ENCODE measurements at regions of chr10 and their contacts with region 1.

Region 1: GRCh38 chr10:92290837-92291615 is at the starts of genes CPEB3 and MARCHF5:
- DNase-seq: peak; percentile 98
- H3K4me3 ChIP-seq: peak within 1 kb of the TSS; percentile 66 to 99 (median 79)
- H3K27ac ChIP-seq: peak within 1 kb of the TSS; percentile 87
- H3K4me1 ChIP-seq: peaks cover 15% of the 10 kb centered on the region
- H3K27me3 ChIP-seq: no peaks in the 10 kb centered on the region
- CTCF ChIP-seq: peak; percentile 45 to 65
- POLR2A ChIP-seq: peak; percentile 52
- total RNA-seq, gene CPEB3: 2.2 and 2.3 TPM in 2 replicates
- total RNA-seq, gene MARCHF5: 48.0 and 55.7 TPM in 2 replicates

Region 2: DNA sequence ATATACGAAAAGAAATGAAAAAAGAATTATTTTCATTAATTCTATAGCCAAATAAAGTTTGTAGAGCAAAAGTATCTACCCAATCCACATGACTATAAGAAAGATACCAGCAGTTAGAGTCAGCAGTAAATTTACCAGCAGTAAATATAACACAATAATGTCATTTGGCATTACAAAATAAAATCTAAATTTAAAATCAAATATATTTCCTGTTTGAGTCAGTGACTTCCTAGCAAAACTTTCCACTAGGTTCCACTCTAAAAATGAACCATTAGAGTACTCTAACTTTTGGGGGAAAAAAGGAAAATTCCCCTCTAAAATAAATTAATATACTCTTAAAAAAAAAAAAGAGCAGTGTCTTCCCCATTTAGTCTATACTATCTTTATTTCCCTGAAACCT is 144.9 kb before region 1 on chr10:
- CTCF ChIA-PET with region 1: interaction called, 8 read pairs
- POLR2A ChIA-PET with region 1: interaction called, 5 read pairs
- dilution Hi-C with region 1: no loop called
- intact Hi-C with region 1: loop called (anchors 5 kb)
- DNase-seq: peak; percentile 26
- H3K4me3 ChIP-seq: peak overlapping the region in 1 of 3 experiments; percentile 38
- H3K27ac ChIP-seq: peak overlapping the region; percentile 26
- H3K4me1 ChIP-seq: peaks cover 33% of the 10 kb centered on the region
- H3K27me3 ChIP-seq: no peaks in the 10 kb centered on the region
- CTCF ChIP-seq: no peak
- POLR2A ChIP-seq: no peak

Region 3: GRCh38 chr10:92156874-92157773 is 133.9 kb before region 1 on chr10:
- CTCF ChIA-PET with region 1: no interaction called
- POLR2A ChIA-PET with region 1: no interaction called
- dilution Hi-C with region 1: no loop called
- intact Hi-C with region 1: no loop called
- DNase-seq: no peak
- H3K4me3 ChIP-seq: no peak overlapping the region
- H3K27ac ChIP-seq: no peak overlapping the region
- H3K4me1 ChIP-seq: no peaks in the 10 kb centered on the region
- H3K27me3 ChIP-seq: no peaks in the 10 kb centered on the region
- CTCF ChIP-seq: no peak
- POLR2A ChIP-seq: no peak

Region 4: GRCh38 chr10:92208736-92209327 is 82.2 kb before region 1 on chr10:
- CTCF ChIA-PET with region 1: interaction called, 9 read pairs
- POLR2A ChIA-PET with region 1: interaction called, 5 read pairs
- dilution Hi-C with region 1: no loop called
- intact Hi-C with region 1: loop called (anchors 1 kb)
- DNase-seq: peak; percentile 15
- H3K4me3 ChIP-seq: no peak overlapping the region
- H3K27ac ChIP-seq: no peak overlapping the region
- H3K4me1 ChIP-seq: peaks cover 10% of the 10 kb centered on the region
- H3K27me3 ChIP-seq: no peaks in the 10 kb centered on the region
- CTCF ChIP-seq: no peak
- POLR2A ChIP-seq: no peak

Region 5: DNA sequence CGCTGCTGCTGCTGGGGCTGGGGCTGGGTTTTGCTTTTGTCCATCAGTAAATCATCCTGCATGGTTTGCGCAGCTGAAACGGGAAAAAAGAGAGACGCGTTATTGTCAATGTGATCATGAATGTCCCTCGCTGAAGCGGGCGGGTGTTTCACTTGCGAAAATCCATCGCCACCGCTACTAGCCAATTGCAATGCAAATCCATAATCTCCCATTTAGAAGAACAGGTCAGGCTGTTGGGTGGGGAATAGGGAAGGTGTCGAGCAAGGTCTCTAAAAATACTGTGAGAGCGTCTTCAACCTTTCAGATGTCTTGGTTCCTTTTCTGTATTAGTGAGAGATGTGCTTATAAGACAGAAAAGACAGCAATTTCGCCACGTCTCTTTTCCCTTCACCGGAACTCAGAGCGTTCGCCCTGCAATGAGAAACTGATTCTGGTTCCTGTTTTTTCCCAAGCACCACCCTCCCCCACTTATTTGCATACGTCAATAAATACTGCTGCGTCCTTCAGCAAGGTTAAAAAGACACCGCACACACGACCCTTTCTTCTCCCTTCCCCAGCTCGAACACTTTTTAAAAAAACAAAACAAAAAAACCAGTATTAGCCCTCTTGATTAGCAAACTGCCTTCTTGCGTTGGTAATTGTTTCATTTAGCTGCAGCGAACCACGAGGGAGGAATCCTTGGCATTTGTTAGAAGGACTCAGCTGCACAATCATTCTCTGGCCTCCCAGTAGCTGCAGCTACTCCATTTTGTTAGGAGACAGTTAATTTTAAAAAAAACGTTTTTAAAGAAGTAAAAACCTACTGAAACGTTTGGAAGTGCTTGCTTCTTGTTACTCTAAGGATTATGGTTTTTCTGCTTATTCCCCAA is 50.5 kb before region 1 on chr10:
- CTCF ChIA-PET with region 1: interaction called, 6 read pairs
- POLR2A ChIA-PET with region 1: no interaction called
- dilution Hi-C with region 1: no loop called
- intact Hi-C with region 1: loop called (anchors 1 kb)
- DNase-seq: peak; percentile 81
- H3K4me3 ChIP-seq: peak overlapping the region; percentile 54 to 89 (median 54)
- H3K27ac ChIP-seq: peak overlapping the region; percentile 18
- H3K4me1 ChIP-seq: peaks cover 10% of the 10 kb centered on the region
- H3K27me3 ChIP-seq: no peaks in the 10 kb centered on the region
- CTCF ChIP-seq: no peak
- POLR2A ChIP-seq: no peak

Region 6: DNA sequence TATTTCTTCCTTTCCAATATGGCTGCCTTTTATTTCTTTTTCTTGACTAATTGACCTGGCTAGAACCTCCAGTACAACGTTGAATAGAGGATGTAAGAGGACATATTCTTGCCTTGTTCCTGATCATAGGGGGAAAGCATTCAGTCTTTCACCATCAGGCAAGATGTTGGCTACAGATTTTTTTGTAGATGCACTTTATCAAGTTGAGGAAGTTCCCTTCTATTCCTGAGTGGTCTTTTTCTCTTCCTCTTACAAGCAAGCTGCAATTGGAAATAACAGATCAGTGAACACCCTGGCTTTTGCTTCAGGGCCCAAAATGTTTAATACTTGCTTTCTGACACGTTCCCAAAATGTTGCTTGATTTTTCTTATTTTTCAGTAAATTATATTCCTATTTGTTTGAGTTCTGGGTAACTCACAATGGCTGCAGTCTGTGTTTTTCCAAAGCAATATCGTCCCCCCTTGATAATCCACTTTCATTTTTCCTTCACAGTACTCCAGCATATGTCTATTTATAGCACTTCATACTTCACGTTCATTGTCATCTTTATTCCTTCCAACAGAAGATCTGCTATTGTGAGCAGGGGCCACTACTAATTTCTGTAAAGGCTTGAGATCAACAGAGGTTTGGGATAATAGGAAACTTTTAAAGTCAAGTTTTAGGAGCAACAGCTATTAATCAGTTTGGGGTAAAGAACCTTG is 11.9 kb before region 1 on chr10:
- CTCF ChIA-PET with region 1: interaction called, 13 read pairs
- POLR2A ChIA-PET with region 1: no interaction called
- dilution Hi-C with region 1: no loop called
- intact Hi-C with region 1: no loop called
- DNase-seq: peak; percentile 33
- H3K4me3 ChIP-seq: no peak overlapping the region
- H3K27ac ChIP-seq: no peak overlapping the region
- H3K4me1 ChIP-seq: peaks cover 2% of the 10 kb centered on the region
- H3K27me3 ChIP-seq: no peaks in the 10 kb centered on the region
- CTCF ChIP-seq: no peak
- POLR2A ChIP-seq: no peak

Region 7: GRCh38 chr10:92432596-92432995 is 141.6 kb after region 1 on chr10:
- CTCF ChIA-PET with region 1: no interaction called
- POLR2A ChIA-PET with region 1: interaction called, 4 read pairs
- dilution Hi-C with region 1: no loop called
- intact Hi-C with region 1: loop called (anchors 5 kb)
- DNase-seq: peak; percentile 48
- H3K4me3 ChIP-seq: no peak overlapping the region
- H3K27ac ChIP-seq: no peak overlapping the region
- H3K4me1 ChIP-seq: peaks cover 10% of the 10 kb centered on the region
- H3K27me3 ChIP-seq: no peaks in the 10 kb centered on the region
- CTCF ChIP-seq: no peak
- POLR2A ChIP-seq: no peak

Region 8: GRCh38 chr10:92573798-92574547 is 282.9 kb after region 1 on chr10 and contains the start of gene IDE:
- CTCF ChIA-PET with region 1: no interaction called
- POLR2A ChIA-PET with region 1: no interaction called
- dilution Hi-C with region 1: no loop called
- intact Hi-C with region 1: loop called (anchors 1 kb)
- DNase-seq: peak; percentile 92
- H3K4me3 ChIP-seq: peak within 1 kb of the TSS; percentile 63 to 84 (median 68)
- H3K27ac ChIP-seq: peak within 1 kb of the TSS; percentile 89
- H3K4me1 ChIP-seq: peaks cover 18% of the 10 kb centered on the region
- H3K27me3 ChIP-seq: no peaks in the 10 kb centered on the region
- CTCF ChIP-seq: peak; percentile 83 to 87
- POLR2A ChIP-seq: peak; percentile 84
- total RNA-seq, gene IDE: 52.6 and 53.5 TPM in 2 replicates